Caco-2 (cell line): ENCODE measurements at regions of chr4 and their contacts with region 1.

Region 1: GRCh38 chr4:95038791-95039190 is 281.0 kb downstream of the BMPR1B start:
- DNase-seq: no peak
- H3K4me3 ChIP-seq: no peak overlapping the region
- H3K4me3 Mint-ChIP-seq: no peak overlapping the region
- H3K27ac Mint-ChIP-seq: no peak overlapping the region
- H3K4me1 ChIP-seq: no peaks in the 10 kb centered on the region
- H3K4me1 Mint-ChIP-seq: no peaks in the 10 kb centered on the region
- H3K27me3 ChIP-seq: no peaks in the 10 kb centered on the region
- H3K27me3 Mint-ChIP-seq: no peaks in the 10 kb centered on the region
- CTCF ChIP-seq: no peak

Region 2: DNA sequence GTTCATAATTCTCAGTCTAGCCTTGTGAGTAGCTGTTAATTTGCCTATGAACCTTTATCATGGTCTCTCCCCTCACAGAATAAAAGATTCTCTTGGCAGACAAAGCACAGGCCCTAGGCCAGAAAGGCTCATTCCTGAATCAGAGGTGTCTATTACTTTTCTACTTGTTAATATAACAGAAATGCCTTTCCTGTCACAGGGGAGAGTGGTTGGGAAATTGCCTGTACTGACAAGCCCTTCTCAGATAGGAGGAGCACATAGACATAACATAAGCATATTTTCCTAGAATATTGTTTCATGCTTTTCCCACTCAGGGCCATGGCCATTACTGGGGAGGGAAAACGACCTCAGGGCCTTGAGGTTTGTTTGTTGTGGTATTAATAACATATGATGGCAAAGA is 27.3 kb after region 1 on chr4:
- CTCF ChIA-PET with region 1: no interaction called
- POLR2A ChIA-PET with region 1: no interaction called
- intact Hi-C with region 1: loop called (anchors 1 kb)
- DNase-seq: no peak
- H3K4me3 ChIP-seq: no peak overlapping the region
- H3K4me3 Mint-ChIP-seq: no peak overlapping the region
- H3K27ac Mint-ChIP-seq: no peak overlapping the region
- H3K4me1 ChIP-seq: no peaks in the 10 kb centered on the region
- H3K4me1 Mint-ChIP-seq: no peaks in the 10 kb centered on the region
- H3K27me3 ChIP-seq: no peaks in the 10 kb centered on the region
- H3K27me3 Mint-ChIP-seq: no peaks in the 10 kb centered on the region
- CTCF ChIP-seq: no peak